Heart right ventricle (tissue), 16 donors: ENCODE measurements at regions of chr4 and their contacts with region 1.

Region 1: GRCh38 chr4:4256799-4257198 is 8.8 kb upstream of the TMEM128 start:
- DNase-seq: no peak
- ATAC-seq: peak in 5 of 8 donors; percentile 60 to 81 (median 65)
- H3K4me3 ChIP-seq: no peak overlapping the region
- H3K27ac ChIP-seq: no peak overlapping the region
- H3K4me1 ChIP-seq: peaks cover 0 to 10% (median 0%) of the 10 kb centered on the region in 9 donors
- H3K27me3 ChIP-seq: peaks cover 0 to under 1% (median 0%) of the 10 kb centered on the region in 7 donors
- CTCF ChIP-seq: peak in 1 of 9 donors; percentile 10

Region 2: GRCh38 chr4:4289941-4290850 is 33.4 kb after region 1 on chr4 and contains the starts of genes LYAR and ZBTB49:
- intact Hi-C with region 1: loop called in 3 of 10 experiments (anchors 5 kb)
- DNase-seq: peak; percentile 94 to 96
- ATAC-seq: peak; percentile 95 to 99 (median 98)
- H3K4me3 ChIP-seq: peak within 1 kb of the TSS; percentile 57 to 99 (median 90)
- H3K27ac ChIP-seq: peak within 1 kb of the TSS; percentile 35 to 91 (median 84)
- H3K4me1 ChIP-seq: peaks cover 4 to 47% (median 27%) of the 10 kb centered on the region in 9 donors
- H3K27me3 ChIP-seq: no peaks in the 10 kb centered on the region
- CTCF ChIP-seq: peak in 1 of 9 donors; percentile 22
- total RNA-seq, gene LYAR: 7.6 to 16.2 (median 11.6) TPM
- total RNA-seq, gene ZBTB49: 2.1 to 6.0 (median 4.6) TPM

Region 3: DNA sequence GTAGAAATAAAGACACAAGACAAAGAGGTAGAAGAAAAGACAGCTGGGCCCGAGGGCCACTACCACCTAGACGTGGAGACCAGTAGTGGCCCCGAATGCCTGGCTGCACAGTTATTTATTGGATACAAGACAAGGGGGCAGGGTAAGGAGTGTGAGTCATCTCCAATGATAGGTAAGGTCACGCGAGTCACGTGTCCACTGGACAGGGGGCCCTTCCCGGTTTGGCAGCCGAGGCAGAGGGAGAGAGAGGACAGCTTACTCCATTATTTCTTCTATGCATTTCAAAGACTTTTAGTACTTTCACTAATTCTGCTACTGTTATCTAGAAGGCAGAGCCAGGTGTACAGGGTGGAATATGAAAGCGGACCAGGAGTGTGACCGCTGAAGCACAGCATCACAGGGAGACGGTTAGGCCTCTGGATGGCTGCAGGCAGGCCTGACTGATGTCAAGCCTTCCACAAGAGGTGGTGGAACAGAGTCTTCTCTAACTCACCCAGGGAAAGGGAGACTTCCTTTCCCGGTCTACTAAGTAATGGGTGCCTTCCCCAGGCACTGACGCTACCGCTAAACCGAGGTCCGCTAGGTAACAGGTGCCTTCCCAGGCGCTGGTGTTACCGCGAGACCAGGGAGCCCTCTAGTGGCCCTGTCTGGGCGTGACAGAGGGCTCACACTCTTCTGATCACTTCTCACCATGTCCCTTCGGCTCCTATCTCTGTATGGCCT is 78.2 kb after region 1 on chr4:
- intact Hi-C with region 1: loop called (anchors 1 to 5 kb)
- DNase-seq: peak; percentile 52 to 66
- ATAC-seq: peak in 5 of 8 donors; percentile 49 to 67 (median 62)
- H3K4me3 ChIP-seq: no peak overlapping the region
- H3K27ac ChIP-seq: no peak overlapping the region
- H3K4me1 ChIP-seq: peaks cover 0 to 23% (median 6%) of the 10 kb centered on the region in 9 donors
- H3K27me3 ChIP-seq: peaks cover 0 to 10% (median 0%) of the 10 kb centered on the region in 7 donors
- CTCF ChIP-seq: peak; percentile 54 to 86 (median 80)

Region 4: DNA sequence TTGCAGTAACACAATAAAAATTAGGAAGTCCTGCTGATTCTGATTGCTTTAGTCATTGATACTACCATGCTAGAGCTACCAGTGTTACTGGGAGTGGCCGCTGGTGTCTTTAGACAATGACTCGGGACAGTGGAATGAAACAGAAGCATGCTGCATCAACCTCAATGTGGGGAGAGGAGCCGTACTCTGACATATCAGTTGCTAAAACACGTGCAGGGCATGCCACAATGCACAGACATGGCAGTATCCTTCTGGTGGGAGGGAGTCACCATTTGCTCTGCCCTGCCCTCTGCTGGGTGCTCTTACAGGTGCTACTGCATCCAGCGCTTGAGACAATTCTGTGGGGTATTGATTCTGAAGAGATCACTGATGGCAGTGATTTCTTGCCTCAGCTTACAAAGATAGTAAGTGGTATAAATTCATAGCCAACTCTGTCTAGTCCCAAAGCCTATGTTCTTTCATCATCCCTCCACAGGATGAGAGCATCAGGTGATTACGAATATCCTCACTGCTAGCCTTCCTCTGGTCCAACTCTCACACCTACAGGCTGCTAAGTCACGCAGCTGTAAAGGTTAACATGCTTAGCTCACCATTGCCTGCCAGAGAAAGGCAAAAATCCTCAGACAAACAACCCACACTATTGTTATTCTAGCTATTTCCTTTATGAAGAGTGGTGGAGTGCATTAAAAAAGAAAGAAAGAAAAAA is 173.8 kb after region 1 on chr4:
- intact Hi-C with region 1: loop called in 2 of 10 experiments (anchors 10 kb)
- DNase-seq: no peak
- ATAC-seq: peak in 4 of 8 donors; percentile 48 to 61 (median 50)
- H3K4me3 ChIP-seq: no peak overlapping the region
- H3K27ac ChIP-seq: no peak overlapping the region
- H3K4me1 ChIP-seq: peaks cover 0 to 7% (median 0%) of the 10 kb centered on the region in 9 donors
- H3K27me3 ChIP-seq: no peaks in the 10 kb centered on the region
- CTCF ChIP-seq: peak in 7 of 9 donors; percentile 49 to 63 (median 55)